Natural killer cell (primary cell): ENCODE measurements at regions of chr12 and their contacts with region 1.

Region 1: GRCh38 chr12:42325653-42326474 is at the starts of genes PPHLN1 and ZCRB1:
- DNase-seq: peak; percentile 77 to 87
- ATAC-seq: peak; percentile 87 to 95 (median 92)
- H3K4me3 ChIP-seq: peak within 1 kb of the TSS; percentile 82
- H3K4me3 Mint-ChIP-seq: peak within 1 kb of the TSS; percentile 99
- H3K27ac ChIP-seq: peak within 1 kb of the TSS; percentile 81
- H3K27ac Mint-ChIP-seq: peak within 1 kb of the TSS; percentile 96 to 99
- H3K4me1 ChIP-seq: peaks cover 20% of the 10 kb centered on the region
- H3K4me1 Mint-ChIP-seq: peaks cover 49 to 54% of the 10 kb centered on the region in 2 donors
- H3K27me3 ChIP-seq: no peaks in the 10 kb centered on the region
- H3K27me3 Mint-ChIP-seq: no peaks in the 10 kb centered on the region
- CTCF ChIP-seq: no peak
- total RNA-seq, gene PPHLN1: 98.2 to 101 (median 101) TPM
- total RNA-seq, gene ZCRB1: 28.0 to 35.9 (median 33.8) TPM

Region 2: DNA sequence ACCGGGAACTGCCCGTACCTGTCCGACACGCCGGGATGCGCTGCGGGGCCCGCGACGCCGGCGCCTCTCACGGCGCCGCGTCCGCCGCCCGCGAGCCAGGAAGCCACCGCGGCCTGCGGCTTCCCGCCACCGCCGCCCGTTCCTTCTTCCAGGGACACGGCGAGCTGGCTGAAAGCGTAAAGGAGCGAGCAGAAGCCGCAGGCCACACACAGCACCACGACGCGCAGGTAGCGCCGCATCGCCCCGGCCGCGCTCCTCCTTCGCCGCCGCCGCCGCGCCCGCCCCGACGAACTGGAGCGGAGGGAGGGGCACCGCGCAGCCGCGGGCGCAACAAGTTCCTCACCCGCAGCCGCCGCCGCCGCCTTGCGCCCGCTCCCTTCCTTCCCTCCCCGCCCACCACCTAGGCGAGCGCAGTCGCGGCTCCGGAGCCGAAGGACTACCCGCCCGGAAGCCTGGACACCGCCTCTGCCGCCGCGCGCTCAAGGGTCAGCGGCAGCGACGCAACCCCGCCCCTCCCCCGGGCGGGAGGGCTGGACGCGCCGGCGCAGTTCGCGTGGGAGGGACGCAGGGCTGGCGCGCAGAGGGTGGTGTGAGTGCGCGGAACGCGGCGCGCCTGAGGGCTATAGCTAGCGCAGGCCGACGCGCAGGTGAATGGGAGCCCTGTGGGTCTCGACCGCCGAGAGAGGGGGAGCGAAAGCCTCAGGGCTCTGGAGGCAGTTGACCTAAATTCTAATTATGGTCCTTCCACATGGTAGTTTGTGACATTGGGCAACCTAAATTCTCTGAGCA is 181.3 kb before region 1 on chr12 and contains the start of gene GXYLT1:
- intact Hi-C with region 1: loop called (anchors 5 kb)
- DNase-seq: peak; percentile 79 to 86
- ATAC-seq: peak; percentile 90 to 94 (median 91)
- H3K4me3 ChIP-seq: peak within 1 kb of the TSS; percentile 73
- H3K4me3 Mint-ChIP-seq: peak within 1 kb of the TSS; percentile 96
- H3K27ac ChIP-seq: peak within 1 kb of the TSS; percentile 46
- H3K27ac Mint-ChIP-seq: peak within 1 kb of the TSS; percentile 83 to 85
- H3K4me1 ChIP-seq: peaks cover 14% of the 10 kb centered on the region
- H3K4me1 Mint-ChIP-seq: peaks cover 31 to 40% of the 10 kb centered on the region in 2 donors
- H3K27me3 ChIP-seq: no peaks in the 10 kb centered on the region
- H3K27me3 Mint-ChIP-seq: no peaks in the 10 kb centered on the region
- CTCF ChIP-seq: no peak
- total RNA-seq, gene GXYLT1: 12.3 to 13.0 (median 12.7) TPM